ENCODE measurements at regions of chr18 and their contacts with region 1.

Region 1: GRCh38 chr18:74551936-74552555 is 17.7 kb downstream of the CNDP1 start:
- DNase-seq: peak; percentile 84
- H3K4me3 Mint-ChIP-seq: no peak overlapping the region
- H3K27ac Mint-ChIP-seq: no peak overlapping the region
- H3K4me1 Mint-ChIP-seq: peaks cover 5% of the 10 kb centered on the region
- H3K27me3 Mint-ChIP-seq: peaks cover 40% of the 10 kb centered on the region
- CTCF ChIP-seq: peak; percentile 82

Region 2: GRCh38 chr18:74342416-74343043 is 209.5 kb before region 1 on chr18:
- CTCF ChIA-PET with region 1: interaction called, 14 read pairs
- POLR2A ChIA-PET with region 1: no interaction called
- intact Hi-C with region 1: no loop called
- DNase-seq: peak; percentile 60
- H3K4me3 Mint-ChIP-seq: no peak overlapping the region
- H3K27ac Mint-ChIP-seq: no peak overlapping the region
- H3K4me1 Mint-ChIP-seq: no peaks in the 10 kb centered on the region
- H3K27me3 Mint-ChIP-seq: peaks cover 41% of the 10 kb centered on the region
- CTCF ChIP-seq: peak; percentile 62

Region 3: GRCh38 chr18:74489676-74490075 is 62.4 kb before region 1 on chr18:
- CTCF ChIA-PET with region 1: interaction called, 57 read pairs
- POLR2A ChIA-PET with region 1: interaction called, 7 read pairs
- intact Hi-C with region 1: no loop called
- DNase-seq: no peak
- H3K4me3 Mint-ChIP-seq: no peak overlapping the region
- H3K27ac Mint-ChIP-seq: no peak overlapping the region
- H3K4me1 Mint-ChIP-seq: no peaks in the 10 kb centered on the region
- H3K27me3 Mint-ChIP-seq: peaks cover 11% of the 10 kb centered on the region
- CTCF ChIP-seq: no peak

Region 4: GRCh38 chr18:74506425-74507119 is 45.5 kb before region 1 on chr18:
- CTCF ChIA-PET with region 1: interaction called, 10 read pairs
- POLR2A ChIA-PET with region 1: no interaction called
- intact Hi-C with region 1: no loop called
- DNase-seq: no peak
- H3K4me3 Mint-ChIP-seq: no peak overlapping the region
- H3K27ac Mint-ChIP-seq: peak overlapping the region; percentile 55
- H3K4me1 Mint-ChIP-seq: no peaks in the 10 kb centered on the region
- H3K27me3 Mint-ChIP-seq: no peaks in the 10 kb centered on the region
- CTCF ChIP-seq: no peak

Region 5: DNA sequence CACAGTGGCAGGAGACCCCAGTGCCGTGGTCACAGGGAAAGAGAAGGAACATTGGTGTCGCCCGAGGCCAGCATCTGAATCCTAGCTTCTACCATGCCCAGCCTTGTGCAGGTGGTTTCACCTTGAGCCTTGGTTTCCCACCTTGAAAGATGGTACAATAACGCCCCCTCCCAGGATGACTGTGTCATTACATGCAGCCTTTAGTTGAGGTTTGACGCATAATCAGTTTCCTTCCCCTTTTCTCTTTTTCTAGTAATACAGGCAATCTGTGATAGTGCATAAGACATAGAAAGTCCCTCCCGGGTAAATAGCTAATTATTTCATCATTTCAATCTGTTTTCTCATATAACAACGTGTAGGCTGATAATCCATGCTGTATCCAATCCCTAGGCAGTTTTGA is 15.8 kb after region 1 on chr18:
- CTCF ChIA-PET with region 1: interaction called, 18 read pairs
- POLR2A ChIA-PET with region 1: interaction called, 3 read pairs
- intact Hi-C with region 1: no loop called
- DNase-seq: no peak
- H3K4me3 Mint-ChIP-seq: no peak overlapping the region
- H3K27ac Mint-ChIP-seq: no peak overlapping the region
- H3K4me1 Mint-ChIP-seq: no peaks in the 10 kb centered on the region
- H3K27me3 Mint-ChIP-seq: peaks cover 30% of the 10 kb centered on the region
- CTCF ChIP-seq: no peak

Region 6: GRCh38 chr18:74689251-74689650 is 137.2 kb after region 1 on chr18:
- CTCF ChIA-PET with region 1: no interaction called
- POLR2A ChIA-PET with region 1: no interaction called
- intact Hi-C with region 1: no loop called
- DNase-seq: no peak
- H3K4me3 Mint-ChIP-seq: no peak overlapping the region
- H3K27ac Mint-ChIP-seq: no peak overlapping the region
- H3K4me1 Mint-ChIP-seq: no peaks in the 10 kb centered on the region
- H3K27me3 Mint-ChIP-seq: no peaks in the 10 kb centered on the region
- CTCF ChIP-seq: no peak

Region 7: GRCh38 chr18:74892066-74892627 is 340.1 kb after region 1 on chr18:
- CTCF ChIA-PET with region 1: no interaction called
- POLR2A ChIA-PET with region 1: no interaction called
- intact Hi-C with region 1: no loop called
- DNase-seq: no peak
- H3K4me3 Mint-ChIP-seq: no peak overlapping the region
- H3K27ac Mint-ChIP-seq: no peak overlapping the region
- H3K4me1 Mint-ChIP-seq: peaks cover 7% of the 10 kb centered on the region
- H3K27me3 Mint-ChIP-seq: no peaks in the 10 kb centered on the region
- CTCF ChIP-seq: no peak